ENCODE measurements at regions of chr19 and their contacts with region 1.

Region 1: DNA sequence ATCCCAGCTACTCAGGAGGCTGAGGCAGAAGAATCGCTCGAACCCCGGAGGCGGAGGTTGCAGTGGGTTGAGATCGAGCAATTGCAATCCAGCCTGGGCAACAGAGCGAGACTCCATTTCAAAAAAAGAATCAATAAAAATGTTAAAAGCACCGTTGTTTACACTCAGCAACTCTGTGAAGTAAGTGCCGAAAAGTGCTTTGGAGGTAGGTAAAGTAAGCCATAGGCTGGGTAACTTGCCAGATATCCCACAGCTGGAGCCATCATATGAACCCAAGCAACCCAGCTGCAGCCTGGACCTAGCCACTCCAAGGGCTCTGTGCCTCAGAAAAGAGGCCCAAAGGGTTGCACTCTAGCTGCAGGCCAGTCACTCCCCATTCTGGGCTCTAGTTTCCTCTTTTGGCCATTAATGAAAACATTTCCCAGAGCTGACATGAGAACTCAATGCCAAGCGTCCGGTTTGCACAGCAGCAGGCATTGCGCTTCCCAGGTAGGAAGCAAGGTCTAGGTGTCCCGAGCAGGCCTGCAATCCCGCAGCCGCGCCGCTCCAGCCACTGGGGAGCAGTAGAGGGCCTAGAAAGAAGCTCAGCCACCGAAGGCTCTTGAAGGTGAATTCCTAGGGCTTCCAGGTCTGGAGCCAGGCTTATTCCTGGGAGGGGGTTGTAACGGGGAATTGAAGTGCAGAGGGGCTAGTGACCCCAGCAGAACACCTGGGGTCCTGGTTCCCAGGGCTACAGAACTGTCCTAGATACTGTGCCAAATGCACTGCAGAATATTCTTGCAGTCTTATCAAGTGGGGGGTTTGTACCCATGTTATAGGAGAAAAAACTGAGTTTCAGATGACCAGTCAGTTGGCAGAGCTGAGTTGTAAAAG is 4.1 kb upstream of the CD79A start:
- DNase-seq: peak; percentile 88 to 90
- H3K4me3 ChIP-seq: no peak overlapping the region
- H3K27ac ChIP-seq: peak overlapping the region in 2 of 5 donors; percentile 61 to 67
- H3K4me1 ChIP-seq: peaks cover 4 to 66% (median 31%) of the 10 kb centered on the region in 4 donors
- H3K27me3 ChIP-seq: no peaks in the 10 kb centered on the region
- CTCF ChIP-seq: peak in 5 of 7 experiments; percentile 35 to 73 (median 67)
- EP300 ChIP-seq: no peak
- POLR2A ChIP-seq: no peak

Region 2: GRCh38 chr19:41821003-41821735 is 51.8 kb before region 1 on chr19:
- intact Hi-C with region 1: no loop called
- DNase-seq: peak; percentile 36 to 66
- H3K4me3 ChIP-seq: no peak overlapping the region
- H3K27ac ChIP-seq: no peak overlapping the region
- H3K4me1 ChIP-seq: no peaks in the 10 kb centered on the region
- H3K27me3 ChIP-seq: peaks cover 0 to 13% (median 0%) of the 10 kb centered on the region in 3 donors
- CTCF ChIP-seq: peak in 5 of 7 experiments; percentile 27 to 56 (median 31)
- EP300 ChIP-seq: no peak
- POLR2A ChIP-seq: no peak

Region 3: GRCh38 chr19:41934849-41935374 is 61.9 kb after region 1 on chr19:
- intact Hi-C with region 1: loop called (anchors 10 kb)
- DNase-seq: peak; percentile 77 to 89
- H3K4me3 ChIP-seq: no peak overlapping the region
- H3K27ac ChIP-seq: no peak overlapping the region
- H3K4me1 ChIP-seq: peaks cover 7 to 33% (median 15%) of the 10 kb centered on the region in 4 donors
- H3K27me3 ChIP-seq: peaks cover 8 to 99% (median 45%) of the 10 kb centered on the region in 3 donors
- CTCF ChIP-seq: peak in 5 of 7 experiments; percentile 56 to 84 (median 81)
- EP300 ChIP-seq: no peak
- POLR2A ChIP-seq: no peak

Region 4: DNA sequence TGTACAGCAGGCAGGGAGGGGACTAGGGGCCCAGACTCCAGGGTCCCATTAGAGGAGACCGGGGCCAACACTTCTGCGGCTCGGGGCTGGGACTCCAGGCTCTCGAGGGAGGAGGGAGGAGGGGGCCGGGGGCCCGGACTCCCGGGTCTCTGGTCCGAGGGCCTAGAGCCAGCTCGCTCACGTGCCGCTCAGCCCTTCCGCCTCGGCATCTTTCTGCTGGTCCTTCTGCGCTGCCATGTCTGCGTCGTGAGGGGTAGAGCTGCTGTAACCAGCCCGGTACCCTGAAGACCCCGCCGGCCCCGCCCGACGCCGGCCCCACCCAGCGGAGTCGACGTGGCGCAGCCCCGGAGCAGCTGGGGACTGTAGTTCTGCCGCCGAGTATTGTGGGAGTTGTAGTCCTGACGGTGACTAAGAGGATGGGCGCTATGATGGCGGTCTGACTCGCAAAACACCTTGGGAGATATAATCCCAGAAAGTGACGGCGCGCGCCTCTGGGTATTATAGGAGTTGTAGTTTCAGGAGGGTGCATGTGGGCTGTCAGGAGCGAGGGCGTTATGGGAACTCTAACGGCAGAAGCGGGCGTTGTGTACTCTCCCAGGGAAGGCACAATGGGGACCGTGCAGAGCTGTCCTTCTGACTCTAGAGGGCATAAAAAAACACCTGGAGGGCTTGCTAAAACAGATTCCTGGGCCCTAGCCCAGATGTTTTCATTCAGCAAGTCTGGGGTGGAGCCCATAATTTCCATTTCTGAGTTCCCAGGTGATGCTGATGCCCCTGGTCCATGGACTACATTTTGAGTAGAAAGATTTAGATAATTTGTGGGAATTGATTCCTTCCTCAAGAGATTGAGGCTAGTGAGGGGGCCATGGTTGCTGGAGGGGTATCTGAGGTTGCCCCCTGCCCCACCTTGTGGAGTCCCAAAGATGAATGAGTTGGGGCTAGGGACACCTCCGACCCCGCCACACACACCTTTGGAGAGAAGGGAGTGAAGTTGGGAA is 86.3 kb after region 1 on chr19 and contains the start of gene RABAC1:
- intact Hi-C with region 1: loop called (anchors 5 kb)
- DNase-seq: peak; percentile 89 to 98
- H3K4me3 ChIP-seq: peak within 1 kb of the TSS; percentile 83 to 92 (median 90)
- H3K27ac ChIP-seq: peak within 1 kb of the TSS; percentile 92 to 97 (median 96)
- H3K4me1 ChIP-seq: peaks cover 15 to 39% (median 24%) of the 10 kb centered on the region in 4 donors
- H3K27me3 ChIP-seq: no peaks in the 10 kb centered on the region
- CTCF ChIP-seq: no peak
- EP300 ChIP-seq: no peak
- POLR2A ChIP-seq: no peak
- total RNA-seq, gene RABAC1: 44.6 to 499 (median 114) TPM

Region 5: GRCh38 chr19:41978470-41978869 is 105.5 kb after region 1 on chr19:
- intact Hi-C with region 1: no loop called
- DNase-seq: no peak
- H3K4me3 ChIP-seq: no peak overlapping the region
- H3K27ac ChIP-seq: no peak overlapping the region
- H3K4me1 ChIP-seq: no peaks in the 10 kb centered on the region
- H3K27me3 ChIP-seq: peaks cover 0 to 20% (median 0%) of the 10 kb centered on the region in 3 donors
- CTCF ChIP-seq: no peak
- EP300 ChIP-seq: no peak
- POLR2A ChIP-seq: no peak